T-cell (primary cell): ENCODE measurements at regions of chr11 and their contacts with region 1.

Region 1: DNA sequence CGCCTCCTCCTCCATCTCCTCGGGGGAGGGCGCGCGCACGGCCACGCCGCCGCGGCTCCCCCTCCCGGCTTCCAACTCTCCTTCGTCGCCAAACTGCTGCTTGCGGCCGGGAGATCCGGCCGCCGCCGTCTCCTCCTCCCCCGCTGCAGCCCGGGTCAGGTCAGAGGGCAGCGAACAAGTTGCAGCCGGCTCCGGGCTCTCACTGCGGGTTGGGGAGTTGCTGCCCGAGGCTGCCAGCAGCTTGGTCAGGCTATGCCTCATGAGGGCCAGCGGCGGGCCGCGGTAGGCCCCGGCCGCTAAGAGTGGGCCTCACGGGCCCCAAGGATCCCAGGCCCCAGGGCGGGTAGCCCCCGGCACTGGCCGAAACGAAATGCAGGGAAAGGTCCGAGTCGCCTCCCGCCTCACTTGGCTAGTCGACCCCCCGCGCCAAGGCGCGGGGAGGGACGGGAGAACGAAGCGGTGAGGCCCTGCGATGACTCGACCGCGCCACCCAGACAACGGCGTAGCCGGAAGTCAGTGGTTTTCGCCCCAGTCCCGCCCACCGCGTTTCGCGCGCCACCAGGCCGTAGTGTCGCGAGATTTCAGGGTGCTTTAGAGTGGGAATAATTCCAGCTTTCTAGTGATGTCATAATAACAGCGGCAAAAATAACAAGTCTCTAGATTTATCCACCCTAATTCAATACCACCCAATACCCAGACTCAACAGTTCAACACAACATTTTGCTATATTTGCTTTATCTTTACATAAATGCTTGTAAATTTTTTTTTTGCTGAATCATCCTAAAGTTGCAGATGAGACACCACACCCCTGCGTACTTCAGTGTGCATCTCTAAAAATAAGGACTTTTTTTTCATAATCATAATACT is at the start of gene CREBZF:
- DNase-seq: peak; percentile 80 to 94 (median 88)
- ATAC-seq: peak; percentile 76 to 80 (median 78)
- H3K4me3 ChIP-seq: peak within 1 kb of the TSS; percentile 81 to 99
- H3K4me3 Mint-ChIP-seq: peak within 1 kb of the TSS; percentile 98 to 100 (median 100)
- H3K27ac ChIP-seq: peak within 1 kb of the TSS; percentile 99
- H3K27ac Mint-ChIP-seq: peak within 1 kb of the TSS; percentile 99
- H3K4me1 ChIP-seq: peaks cover 8 to 29% of the 10 kb centered on the region in 2 experiments
- H3K4me1 Mint-ChIP-seq: peaks cover 39 to 48% (median 43%) of the 10 kb centered on the region in 3 donors
- H3K27me3 ChIP-seq: no peaks in the 10 kb centered on the region
- H3K27me3 Mint-ChIP-seq: no peaks in the 10 kb centered on the region
- total RNA-seq, gene CREBZF: 58.8 to 93.6 (median 86.5) TPM

Region 2: DNA sequence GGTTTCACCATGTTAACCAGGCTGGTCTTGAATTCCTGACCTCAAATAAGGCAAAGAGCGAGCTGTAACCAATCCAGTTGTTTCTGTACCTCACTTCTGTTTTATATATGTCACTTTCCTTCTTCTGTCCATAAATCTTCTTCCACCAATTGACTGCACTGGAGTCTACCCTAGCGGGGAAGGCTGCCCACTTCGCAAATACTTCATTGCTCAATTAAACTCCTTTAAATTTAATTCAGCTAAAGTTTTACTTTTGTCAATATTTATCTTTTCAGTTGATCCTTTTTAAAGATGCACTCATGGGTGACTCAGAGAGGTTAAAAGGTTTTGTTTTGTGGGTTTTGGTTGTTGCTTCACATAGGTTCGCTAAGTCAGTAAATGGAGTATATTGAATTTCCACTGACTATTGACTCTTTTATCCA is 634.9 kb before region 1 on chr11:
- CTCF ChIA-PET with region 1: no interaction called
- POLR2A ChIA-PET with region 1: no interaction called
- DNase-seq: no peak
- ATAC-seq: no peak
- H3K4me3 ChIP-seq: no peak overlapping the region
- H3K4me3 Mint-ChIP-seq: no peak overlapping the region
- H3K27ac ChIP-seq: no peak overlapping the region
- H3K27ac Mint-ChIP-seq: no peak overlapping the region
- H3K4me1 ChIP-seq: no peaks in the 10 kb centered on the region
- H3K4me1 Mint-ChIP-seq: no peaks in the 10 kb centered on the region
- H3K27me3 ChIP-seq: no peaks in the 10 kb centered on the region
- H3K27me3 Mint-ChIP-seq: no peaks in the 10 kb centered on the region

Region 3: DNA sequence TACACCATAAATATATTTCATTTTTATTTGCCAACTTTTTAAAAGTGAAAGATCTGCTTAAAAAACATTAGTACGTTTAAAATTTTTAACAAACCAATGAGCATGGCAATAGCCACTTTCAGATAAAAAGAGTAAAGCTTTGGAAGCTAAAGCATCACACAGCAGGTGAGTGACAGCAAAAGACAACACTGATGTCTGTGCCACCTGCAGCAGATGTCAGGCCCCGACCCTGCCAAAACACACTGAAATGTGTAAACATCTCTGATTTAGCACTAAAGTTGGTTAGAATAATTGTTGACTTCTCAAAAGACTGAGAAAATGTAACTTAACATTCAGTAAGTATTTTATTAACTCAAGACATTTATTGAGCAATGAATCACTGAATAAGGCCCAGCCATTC is 270.6 kb before region 1 on chr11:
- CTCF ChIA-PET with region 1: no interaction called
- POLR2A ChIA-PET with region 1: no interaction called
- DNase-seq: no peak
- ATAC-seq: no peak
- H3K4me3 ChIP-seq: no peak overlapping the region
- H3K4me3 Mint-ChIP-seq: no peak overlapping the region
- H3K27ac ChIP-seq: no peak overlapping the region
- H3K27ac Mint-ChIP-seq: no peak overlapping the region
- H3K4me1 ChIP-seq: no peaks in the 10 kb centered on the region
- H3K4me1 Mint-ChIP-seq: no peaks in the 10 kb centered on the region
- H3K27me3 ChIP-seq: no peaks in the 10 kb centered on the region
- H3K27me3 Mint-ChIP-seq: no peaks in the 10 kb centered on the region

Region 4: GRCh38 chr11:85540635-85541205 is 124.1 kb before region 1 on chr11:
- CTCF ChIA-PET with region 1: no interaction called
- POLR2A ChIA-PET with region 1: no interaction called
- DNase-seq: no peak
- ATAC-seq: no peak
- H3K4me3 ChIP-seq: no peak overlapping the region
- H3K4me3 Mint-ChIP-seq: no peak overlapping the region
- H3K27ac ChIP-seq: no peak overlapping the region
- H3K27ac Mint-ChIP-seq: no peak overlapping the region
- H3K4me1 ChIP-seq: no peaks in the 10 kb centered on the region
- H3K4me1 Mint-ChIP-seq: no peaks in the 10 kb centered on the region
- H3K27me3 ChIP-seq: no peaks in the 10 kb centered on the region
- H3K27me3 Mint-ChIP-seq: no peaks in the 10 kb centered on the region

Region 5: DNA sequence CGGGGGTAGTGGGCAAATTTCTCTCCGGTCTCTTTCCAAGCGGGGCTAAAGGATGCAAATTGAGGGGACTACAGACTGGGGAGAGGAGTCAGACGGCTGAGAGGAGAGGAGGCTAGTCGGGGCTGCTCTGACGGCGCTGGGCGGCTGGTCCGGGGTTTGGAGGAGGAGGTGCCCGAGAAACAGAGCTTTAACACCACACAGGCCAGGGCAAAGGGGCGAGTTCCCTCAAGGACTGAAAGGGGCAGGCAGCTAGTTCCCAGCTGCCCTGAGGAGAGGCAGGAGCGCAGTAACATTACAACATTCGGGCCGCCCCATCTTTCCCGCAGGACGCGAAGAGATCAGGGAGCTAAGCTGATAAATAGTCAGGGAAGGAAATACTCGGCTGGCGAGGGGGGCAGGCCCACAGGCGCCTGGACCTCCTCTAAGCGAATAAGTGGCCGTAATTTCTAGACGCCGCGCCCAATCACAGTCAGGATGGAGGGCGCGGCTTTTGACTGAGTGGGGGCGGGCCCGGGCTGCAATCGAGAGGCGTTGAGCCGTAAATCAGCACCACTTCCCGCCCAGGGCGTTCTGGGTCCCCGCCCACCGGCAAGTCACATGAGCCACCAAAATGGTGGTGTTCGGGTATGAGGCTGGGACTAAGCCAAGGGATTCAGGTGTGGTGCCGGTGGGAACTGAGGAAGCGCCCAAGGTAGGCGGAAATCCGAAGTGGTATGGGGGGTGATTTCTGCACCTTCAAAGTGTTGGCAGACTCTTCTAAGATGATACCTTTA is 36.7 kb before region 1 on chr11 and contains the start of gene TMEM126B:
- CTCF ChIA-PET with region 1: interaction called in 1 of 2 experiments, 3 read pairs
- POLR2A ChIA-PET with region 1: interaction called, 3 to 13 read pairs
- DNase-seq: peak; percentile 89 to 98 (median 96)
- ATAC-seq: peak; percentile 97 to 99 (median 99)
- H3K4me3 ChIP-seq: peak within 1 kb of the TSS; percentile 92 to 98
- H3K4me3 Mint-ChIP-seq: peak within 1 kb of the TSS; percentile 95 to 98 (median 96)
- H3K27ac ChIP-seq: peak within 1 kb of the TSS; percentile 80
- H3K27ac Mint-ChIP-seq: peak within 1 kb of the TSS; percentile 95 to 98
- H3K4me1 ChIP-seq: peaks cover 16 to 18% of the 10 kb centered on the region in 2 experiments
- H3K4me1 Mint-ChIP-seq: peaks cover 44 to 48% (median 44%) of the 10 kb centered on the region in 3 donors
- H3K27me3 ChIP-seq: no peaks in the 10 kb centered on the region
- H3K27me3 Mint-ChIP-seq: no peaks in the 10 kb centered on the region
- total RNA-seq, gene TMEM126B: 25.2 to 40.6 (median 34.4) TPM

Region 6: DNA sequence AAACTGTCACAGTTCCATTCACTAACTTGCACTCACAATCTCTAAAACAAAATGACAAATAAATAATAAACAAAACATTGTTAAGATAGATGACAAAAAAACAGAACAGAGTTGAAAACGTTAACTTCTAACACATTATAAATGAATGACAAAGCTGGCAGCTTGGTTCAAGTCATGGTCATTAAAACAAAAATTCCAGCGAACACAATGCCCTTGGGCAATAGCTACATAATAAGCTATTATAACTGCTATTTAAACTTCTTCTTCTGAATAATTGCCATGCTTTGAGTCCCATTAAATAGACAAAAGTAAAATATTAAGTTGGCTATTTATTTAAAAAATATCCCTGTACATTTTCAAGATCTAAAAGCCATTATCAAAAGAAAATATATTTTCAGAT is 349.4 kb after region 1 on chr11:
- CTCF ChIA-PET with region 1: no interaction called
- POLR2A ChIA-PET with region 1: no interaction called
- DNase-seq: no peak
- ATAC-seq: no peak
- H3K4me3 ChIP-seq: no peak overlapping the region
- H3K4me3 Mint-ChIP-seq: no peak overlapping the region
- H3K27ac ChIP-seq: no peak overlapping the region
- H3K27ac Mint-ChIP-seq: no peak overlapping the region
- H3K4me1 ChIP-seq: no peaks in the 10 kb centered on the region
- H3K4me1 Mint-ChIP-seq: peaks cover 17 to 20% (median 19%) of the 10 kb centered on the region in 3 donors
- H3K27me3 ChIP-seq: no peaks in the 10 kb centered on the region
- H3K27me3 Mint-ChIP-seq: no peaks in the 10 kb centered on the region